Ascending aorta (tissue), 2 donors: ENCODE measurements at regions of chr16 and their contacts with region 1.

Region 1: DNA sequence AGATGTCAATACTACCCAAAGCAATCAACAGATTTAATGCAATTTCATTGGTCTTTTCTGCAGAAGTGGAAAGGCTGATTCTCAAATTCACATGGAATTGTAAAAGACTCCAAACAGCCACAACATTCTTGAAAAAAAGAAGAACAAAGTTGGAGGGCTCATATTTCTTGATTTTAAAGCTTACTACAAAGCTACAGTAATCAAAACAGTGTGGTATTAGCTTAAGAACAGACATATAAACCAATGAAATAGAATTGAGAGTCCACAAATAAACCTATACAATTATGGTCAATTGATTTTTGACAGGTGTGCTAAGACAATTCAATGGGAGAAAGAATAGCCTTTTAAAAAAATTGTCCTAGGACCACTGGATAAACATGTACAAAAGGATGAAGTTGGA is 14.4 kb upstream of the ABCC1 start:
- DNase-seq: no peak
- H3K4me3 ChIP-seq: no peak overlapping the region
- H3K27ac ChIP-seq: no peak overlapping the region
- H3K4me1 ChIP-seq: no peaks in the 10 kb centered on the region
- H3K27me3 ChIP-seq: no peaks in the 10 kb centered on the region
- CTCF ChIP-seq: no peak

Region 2: DNA sequence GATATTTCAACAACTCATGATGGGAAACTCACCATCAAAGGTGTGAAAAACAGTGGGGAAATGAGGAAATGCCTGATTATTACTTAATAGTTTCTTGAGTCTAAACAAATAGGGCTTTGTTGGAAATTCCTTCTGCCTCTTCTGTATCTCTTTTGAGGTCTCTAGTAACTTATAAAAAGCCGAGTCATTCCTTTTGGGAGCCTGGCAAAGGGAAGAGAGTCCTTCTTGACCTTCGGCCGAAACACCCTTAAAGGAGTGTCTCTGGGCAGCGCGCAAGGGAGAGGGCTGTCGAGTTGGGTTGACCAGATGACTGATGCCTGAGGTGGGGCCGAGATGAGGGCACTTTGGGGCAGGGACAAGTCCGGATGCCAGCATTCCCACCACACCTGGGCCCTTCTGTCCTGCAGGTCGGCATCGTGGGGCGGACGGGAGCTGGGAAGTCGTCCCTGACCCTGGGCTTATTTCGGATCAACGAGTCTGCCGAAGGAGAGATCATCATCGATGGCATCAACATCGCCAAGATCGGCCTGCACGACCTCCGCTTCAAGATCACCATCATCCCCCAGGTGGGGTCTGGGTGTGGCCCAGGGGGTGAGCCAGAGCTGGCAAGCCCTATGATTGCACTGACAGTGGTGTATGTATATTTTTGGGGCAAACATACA is 199.1 kb after region 1 on chr16:
- intact Hi-C with region 1: loop called (anchors 5 kb)
- DNase-seq: no peak
- H3K4me3 ChIP-seq: no peak overlapping the region
- H3K27ac ChIP-seq: no peak overlapping the region
- H3K4me1 ChIP-seq: no peaks in the 10 kb centered on the region
- H3K27me3 ChIP-seq: no peaks in the 10 kb centered on the region
- CTCF ChIP-seq: no peak